Endothelial cell of umbilical vein (primary cell): ENCODE measurements at regions of chr3 and their contacts with region 1.

Region 1: DNA sequence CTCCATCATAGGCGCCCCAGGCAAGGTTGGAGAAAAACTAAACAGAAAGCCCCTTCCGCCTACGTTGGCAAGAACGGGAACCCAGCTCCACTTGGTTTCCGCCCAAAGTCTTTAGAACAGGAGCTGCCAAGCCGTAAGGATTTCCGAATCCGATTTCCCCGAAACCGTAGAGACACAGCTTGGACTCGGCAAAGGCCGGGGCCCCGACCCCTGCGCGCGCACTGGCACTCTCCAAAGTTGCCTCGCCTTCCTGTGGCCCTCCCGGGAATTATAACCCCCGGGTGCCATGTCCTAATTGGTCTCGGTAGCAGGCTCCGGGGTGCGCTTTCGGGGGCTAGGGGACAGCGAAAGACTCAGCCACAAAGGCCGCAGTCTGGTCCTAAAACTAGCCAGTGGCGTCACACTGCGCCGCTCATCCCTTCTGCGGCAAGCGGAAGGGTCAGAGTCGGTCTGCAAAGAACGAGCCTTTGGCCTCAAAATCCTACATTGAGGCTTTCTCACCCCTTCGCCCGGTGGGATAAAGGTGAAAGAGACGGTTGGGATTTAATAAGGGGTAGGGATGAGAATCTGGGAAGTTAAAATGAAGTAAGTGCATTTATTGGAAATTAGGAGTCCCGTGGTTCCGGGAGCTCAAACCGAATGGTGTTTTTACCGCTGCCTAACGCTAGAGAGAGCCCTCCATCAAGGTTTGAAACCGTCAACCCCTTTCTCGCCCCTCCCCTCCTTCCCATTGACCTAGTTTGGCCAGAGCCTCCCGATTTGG is 6.8 kb downstream of the BCL6 start:
- DNase-seq: peak; percentile 87
- H3K4me3 ChIP-seq: peak overlapping the region; percentile 47 to 82 (median 58)
- H3K27ac ChIP-seq: peak overlapping the region; percentile 94
- H3K4me1 ChIP-seq: peaks cover 46% of the 10 kb centered on the region
- H3K27me3 ChIP-seq: no peaks in the 10 kb centered on the region
- CTCF ChIP-seq: peak; percentile 79 to 83
- POLR2A ChIP-seq: no peak

Region 2: GRCh38 chr3:187767266-187768012 is 28.9 kb after region 1 on chr3:
- CTCF ChIA-PET with region 1: no interaction called
- POLR2A ChIA-PET with region 1: no interaction called
- dilution Hi-C with region 1: no loop called
- intact Hi-C with region 1: no loop called
- DNase-seq: no peak
- H3K4me3 ChIP-seq: no peak overlapping the region
- H3K27ac ChIP-seq: no peak overlapping the region
- H3K4me1 ChIP-seq: peaks cover 7% of the 10 kb centered on the region
- H3K27me3 ChIP-seq: peaks cover 0 to 2% of the 10 kb centered on the region in 2 experiments
- CTCF ChIP-seq: no peak
- POLR2A ChIP-seq: no peak

Region 3: DNA sequence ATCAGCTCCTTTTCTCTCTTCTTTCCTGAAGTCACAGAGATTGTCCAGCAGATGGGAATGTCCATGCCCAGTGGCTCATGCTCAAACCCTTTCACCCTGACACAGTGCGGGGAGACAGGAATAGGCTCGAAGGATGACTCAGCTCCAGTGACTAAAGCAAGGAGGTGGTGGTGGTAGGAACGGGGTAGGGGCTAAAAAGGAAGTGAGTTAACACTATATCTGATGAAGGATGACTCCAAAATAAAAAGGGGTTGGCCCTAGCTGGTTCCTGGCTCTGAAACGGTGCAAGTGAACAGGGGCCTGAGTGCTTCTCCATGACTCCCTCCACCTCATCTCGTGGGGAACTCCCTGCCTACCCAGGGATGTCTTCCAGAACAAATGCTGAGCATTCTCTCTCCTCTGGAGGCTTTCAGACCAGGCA is 248.0 kb after region 1 on chr3:
- CTCF ChIA-PET with region 1: no interaction called
- POLR2A ChIA-PET with region 1: no interaction called
- dilution Hi-C with region 1: no loop called
- intact Hi-C with region 1: loop called (anchors 5 kb)
- DNase-seq: peak; percentile 84
- H3K4me3 ChIP-seq: no peak overlapping the region
- H3K27ac ChIP-seq: peak overlapping the region; percentile 11
- H3K4me1 ChIP-seq: peaks cover 15% of the 10 kb centered on the region
- H3K27me3 ChIP-seq: no peaks in the 10 kb centered on the region
- CTCF ChIP-seq: no peak
- POLR2A ChIP-seq: no peak

Region 4: GRCh38 chr3:188439080-188439479 is 700.6 kb after region 1 on chr3:
- CTCF ChIA-PET with region 1: interaction called, 3 read pairs
- POLR2A ChIA-PET with region 1: no interaction called
- dilution Hi-C with region 1: no loop called
- intact Hi-C with region 1: loop called (anchors 2 kb)
- DNase-seq: peak; percentile 85
- H3K4me3 ChIP-seq: no peak overlapping the region
- H3K27ac ChIP-seq: peak overlapping the region; percentile 86
- H3K4me1 ChIP-seq: peaks cover 36% of the 10 kb centered on the region
- H3K27me3 ChIP-seq: no peaks in the 10 kb centered on the region
- CTCF ChIP-seq: no peak
- POLR2A ChIP-seq: no peak

Region 5: DNA sequence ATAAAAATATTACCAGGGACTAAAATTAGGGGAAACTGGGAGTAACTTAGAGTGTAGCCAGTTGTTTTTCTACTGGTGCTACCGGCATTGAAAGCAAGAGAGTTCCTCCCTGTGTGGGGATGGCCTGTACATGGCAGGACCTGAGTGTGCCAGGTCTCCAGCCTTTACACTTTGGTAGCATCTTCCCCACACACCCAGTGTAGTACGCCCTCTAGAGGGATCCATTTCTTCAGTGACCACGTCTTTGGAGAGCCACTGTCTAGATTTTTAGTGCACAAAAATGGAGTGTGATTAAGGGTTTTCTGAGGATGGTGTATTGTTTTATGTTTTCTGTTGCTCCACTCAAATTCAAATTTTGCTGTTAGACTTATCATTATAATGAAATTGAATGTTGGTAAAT is 926.3 kb after region 1 on chr3:
- CTCF ChIA-PET with region 1: interaction called, 4 read pairs
- POLR2A ChIA-PET with region 1: no interaction called
- dilution Hi-C with region 1: loop called (anchors 25 kb)
- intact Hi-C with region 1: loop called (anchors 2 kb)
- DNase-seq: peak; percentile 18
- H3K4me3 ChIP-seq: no peak overlapping the region
- H3K27ac ChIP-seq: no peak overlapping the region
- H3K4me1 ChIP-seq: peaks cover 3% of the 10 kb centered on the region
- H3K27me3 ChIP-seq: no peaks in the 10 kb centered on the region
- CTCF ChIP-seq: peak; percentile 29 to 30
- POLR2A ChIP-seq: no peak

Region 6: GRCh38 chr3:188881954-188882641 is 1143.6 kb after region 1 on chr3:
- CTCF ChIA-PET with region 1: interaction called, 13 read pairs
- POLR2A ChIA-PET with region 1: no interaction called
- dilution Hi-C with region 1: no loop called
- intact Hi-C with region 1: loop called (anchors 1 kb)
- DNase-seq: peak; percentile 70
- H3K4me3 ChIP-seq: no peak overlapping the region
- H3K27ac ChIP-seq: peak overlapping the region; percentile 74
- H3K4me1 ChIP-seq: peaks cover 37% of the 10 kb centered on the region
- H3K27me3 ChIP-seq: no peaks in the 10 kb centered on the region
- CTCF ChIP-seq: no peak
- POLR2A ChIP-seq: no peak

Region 7: DNA sequence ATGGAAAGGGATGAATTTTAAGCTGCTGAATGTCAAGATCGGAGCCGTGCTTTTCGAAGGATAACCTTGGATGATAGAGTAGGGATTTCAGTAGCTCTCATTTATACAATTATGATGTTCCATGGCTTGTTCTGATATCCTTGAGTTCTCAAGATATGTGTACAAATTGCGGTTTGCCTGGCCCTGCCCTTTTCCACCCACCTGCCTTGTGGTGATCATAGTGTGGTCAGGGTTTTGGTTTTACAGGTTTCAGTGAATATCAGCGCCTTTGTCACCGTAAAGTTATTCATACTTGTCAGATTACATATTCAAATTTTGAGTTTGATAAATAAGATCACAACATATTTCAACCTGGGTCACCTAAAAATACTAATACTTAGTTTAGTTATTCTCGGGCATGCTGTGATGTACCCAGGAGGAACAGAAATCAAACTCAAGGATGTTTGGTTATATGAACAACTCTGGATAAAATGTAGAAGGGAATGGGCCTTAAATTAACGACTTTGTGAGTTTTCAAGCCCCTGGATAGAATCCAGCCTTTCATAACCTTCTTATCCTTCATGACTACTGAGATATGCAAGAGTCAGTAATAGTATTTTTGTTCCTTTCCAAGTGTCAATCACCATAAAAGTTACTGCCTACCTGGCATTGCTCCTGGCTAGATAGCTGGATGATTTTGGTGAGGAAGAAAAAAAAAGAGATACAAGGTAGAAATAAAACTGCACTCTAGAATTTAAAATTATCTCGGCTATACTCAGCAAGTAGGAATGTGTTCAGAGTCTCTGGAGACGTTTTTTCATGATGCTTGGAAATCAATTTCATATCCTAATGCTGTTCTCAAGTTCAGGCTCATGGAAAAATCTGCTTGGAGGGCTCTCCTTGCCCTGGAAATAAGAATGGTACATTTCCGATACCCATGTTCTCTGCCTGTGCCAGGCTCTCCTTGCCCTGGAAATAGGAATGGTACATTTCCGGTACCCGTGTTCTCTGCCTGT is 1224.0 kb after region 1 on chr3:
- CTCF ChIA-PET with region 1: interaction called, 466 read pairs
- POLR2A ChIA-PET with region 1: no interaction called
- dilution Hi-C with region 1: no loop called
- intact Hi-C with region 1: no loop called
- DNase-seq: no peak
- H3K4me3 ChIP-seq: no peak overlapping the region
- H3K27ac ChIP-seq: no peak overlapping the region
- H3K4me1 ChIP-seq: no peaks in the 10 kb centered on the region
- H3K27me3 ChIP-seq: peaks cover 0 to 4% of the 10 kb centered on the region in 2 experiments
- CTCF ChIP-seq: no peak
- POLR2A ChIP-seq: no peak

Region 8: DNA sequence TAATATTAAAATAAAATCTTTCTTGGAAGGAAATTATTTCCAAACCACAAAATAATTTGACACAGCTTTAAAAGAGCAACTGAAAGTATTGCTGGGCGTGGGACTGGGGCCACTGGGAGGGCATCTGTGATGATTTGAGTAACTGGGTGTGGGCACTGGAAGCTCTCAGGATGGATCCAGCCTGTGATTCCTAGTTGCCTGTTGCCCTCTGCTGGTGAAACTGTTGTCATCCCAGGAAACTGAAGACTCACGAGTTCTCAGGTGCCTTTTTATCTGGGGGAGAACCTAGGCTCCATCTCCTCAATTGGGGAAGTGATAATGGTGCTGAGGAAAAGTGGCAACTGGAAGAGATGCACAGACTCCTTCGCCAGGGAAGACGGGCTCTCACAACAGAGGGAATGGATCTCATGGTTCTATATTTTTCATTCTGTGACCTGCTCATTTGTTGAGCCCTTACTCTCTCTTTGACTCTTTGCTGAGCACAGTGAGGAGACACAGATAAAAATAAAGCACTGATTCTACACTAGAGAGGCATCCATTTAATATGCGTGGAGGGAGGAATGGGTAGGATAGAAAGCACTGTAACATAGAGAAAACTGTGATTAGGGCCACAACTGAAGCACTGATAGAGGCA is 1494.8 kb after region 1 on chr3:
- CTCF ChIA-PET with region 1: interaction called, 24 read pairs
- POLR2A ChIA-PET with region 1: no interaction called
- dilution Hi-C with region 1: no loop called
- intact Hi-C with region 1: loop called (anchors 1 kb)
- DNase-seq: peak; percentile 27
- H3K4me3 ChIP-seq: no peak overlapping the region
- H3K27ac ChIP-seq: no peak overlapping the region
- H3K4me1 ChIP-seq: no peaks in the 10 kb centered on the region
- H3K27me3 ChIP-seq: peaks cover 0 to 4% of the 10 kb centered on the region in 2 experiments
- CTCF ChIP-seq: peak; percentile 35 to 65
- POLR2A ChIP-seq: no peak